ENCODE measurements at regions of chr10 and their contacts with region 1.

Region 1: DNA sequence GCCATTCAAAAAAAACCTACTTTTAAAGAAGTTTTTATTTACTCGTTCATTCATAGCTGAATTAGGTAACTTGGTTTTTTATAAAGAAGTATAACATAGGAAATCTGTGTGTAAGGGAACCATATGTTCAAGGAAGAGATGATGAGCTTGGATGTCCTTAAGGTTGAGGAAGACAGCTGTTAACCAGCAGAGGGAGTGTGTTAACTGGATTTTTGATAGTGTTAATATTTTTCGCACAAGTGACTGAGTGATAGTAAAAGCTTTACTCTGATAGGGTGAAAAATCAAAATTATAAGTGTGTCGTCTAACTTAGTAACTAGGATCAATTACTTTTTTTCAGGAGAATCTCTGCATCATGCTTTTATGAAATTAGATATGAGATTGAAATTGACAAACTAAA is 134.7 kb downstream of the ARL5B start:
- DNase-seq: peak; percentile 49
- H3K4me3 Mint-ChIP-seq: no peak overlapping the region
- H3K27ac Mint-ChIP-seq: no peak overlapping the region
- H3K4me1 Mint-ChIP-seq: peaks cover 7% of the 10 kb centered on the region
- H3K27me3 Mint-ChIP-seq: no peaks in the 10 kb centered on the region
- CTCF ChIP-seq: peak; percentile 46

Region 2: GRCh38 chr10:18400201-18400905 is 393.6 kb before region 1 on chr10:
- CTCF ChIA-PET with region 1: no interaction called
- POLR2A ChIA-PET with region 1: no interaction called
- intact Hi-C with region 1: no loop called
- DNase-seq: no peak
- H3K4me3 Mint-ChIP-seq: peak overlapping the region; percentile 4
- H3K27ac Mint-ChIP-seq: no peak overlapping the region
- H3K4me1 Mint-ChIP-seq: no peaks in the 10 kb centered on the region
- H3K27me3 Mint-ChIP-seq: no peaks in the 10 kb centered on the region
- CTCF ChIP-seq: no peak

Region 3: DNA sequence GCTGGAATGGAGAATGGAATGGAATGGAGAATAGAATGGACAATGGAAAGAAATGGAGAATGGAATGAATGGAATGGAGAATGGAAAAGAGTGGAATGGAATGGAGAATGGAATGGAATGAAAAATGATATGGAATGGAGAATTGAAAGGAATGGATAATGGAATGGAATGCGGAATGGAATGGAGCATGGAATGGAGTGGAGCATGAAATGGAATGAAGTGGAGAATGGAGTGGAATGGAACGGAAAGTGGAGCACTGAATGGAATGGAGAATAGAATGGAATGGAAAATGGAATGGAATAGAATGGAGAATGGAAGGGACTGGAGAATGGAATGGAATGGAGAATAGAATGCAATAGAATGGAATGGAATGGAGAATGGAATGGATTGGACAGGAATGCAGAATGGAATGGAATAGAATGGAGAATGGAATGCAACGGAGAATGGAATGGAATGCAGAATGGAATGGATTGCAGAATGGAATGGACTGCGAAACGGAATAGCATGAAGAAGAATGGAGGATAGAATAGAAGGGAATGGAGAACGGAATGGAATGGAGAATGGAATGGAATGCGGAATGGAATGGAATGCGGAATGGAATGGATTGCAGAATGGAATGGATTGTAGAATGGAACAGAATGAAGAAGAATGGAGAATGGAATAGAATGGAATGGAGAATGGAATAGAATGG is 231.9 kb before region 1 on chr10:
- CTCF ChIA-PET with region 1: no interaction called
- POLR2A ChIA-PET with region 1: no interaction called
- intact Hi-C with region 1: no loop called
- DNase-seq: no peak
- H3K4me3 Mint-ChIP-seq: no peak overlapping the region
- H3K27ac Mint-ChIP-seq: no peak overlapping the region
- H3K4me1 Mint-ChIP-seq: no peaks in the 10 kb centered on the region
- H3K27me3 Mint-ChIP-seq: no peaks in the 10 kb centered on the region
- CTCF ChIP-seq: no peak

Region 4: DNA sequence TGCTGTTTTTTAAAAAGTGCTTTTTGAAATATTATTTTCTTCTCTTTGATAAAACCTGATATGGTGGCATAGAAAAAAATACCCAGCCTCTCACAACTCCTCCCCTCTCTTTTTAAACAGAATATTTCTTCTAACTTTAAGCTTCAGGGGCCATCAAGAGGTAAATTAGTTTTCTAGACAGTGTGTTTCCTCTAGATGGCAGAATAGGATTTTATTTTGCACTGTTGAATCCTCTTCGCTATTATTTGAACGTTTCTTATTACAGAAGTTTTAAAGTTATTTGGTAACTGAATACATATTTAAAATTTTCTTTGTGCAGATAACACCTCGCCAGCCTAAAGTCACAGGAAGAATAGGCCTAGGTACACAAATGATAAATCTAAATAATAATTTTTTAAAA is 104.5 kb before region 1 on chr10:
- CTCF ChIA-PET with region 1: interaction called, 4 read pairs
- POLR2A ChIA-PET with region 1: no interaction called
- intact Hi-C with region 1: loop called (anchors 5 kb)
- DNase-seq: peak; percentile 50
- H3K4me3 Mint-ChIP-seq: no peak overlapping the region
- H3K27ac Mint-ChIP-seq: no peak overlapping the region
- H3K4me1 Mint-ChIP-seq: no peaks in the 10 kb centered on the region
- H3K27me3 Mint-ChIP-seq: no peaks in the 10 kb centered on the region
- CTCF ChIP-seq: peak; percentile 43

Region 5: GRCh38 chr10:18822156-18822555 is 28.2 kb after region 1 on chr10:
- CTCF ChIA-PET with region 1: no interaction called
- POLR2A ChIA-PET with region 1: no interaction called
- intact Hi-C with region 1: no loop called
- DNase-seq: peak; percentile 69
- H3K4me3 Mint-ChIP-seq: no peak overlapping the region
- H3K27ac Mint-ChIP-seq: no peak overlapping the region
- H3K4me1 Mint-ChIP-seq: no peaks in the 10 kb centered on the region
- H3K27me3 Mint-ChIP-seq: no peaks in the 10 kb centered on the region
- CTCF ChIP-seq: no peak

Region 6: DNA sequence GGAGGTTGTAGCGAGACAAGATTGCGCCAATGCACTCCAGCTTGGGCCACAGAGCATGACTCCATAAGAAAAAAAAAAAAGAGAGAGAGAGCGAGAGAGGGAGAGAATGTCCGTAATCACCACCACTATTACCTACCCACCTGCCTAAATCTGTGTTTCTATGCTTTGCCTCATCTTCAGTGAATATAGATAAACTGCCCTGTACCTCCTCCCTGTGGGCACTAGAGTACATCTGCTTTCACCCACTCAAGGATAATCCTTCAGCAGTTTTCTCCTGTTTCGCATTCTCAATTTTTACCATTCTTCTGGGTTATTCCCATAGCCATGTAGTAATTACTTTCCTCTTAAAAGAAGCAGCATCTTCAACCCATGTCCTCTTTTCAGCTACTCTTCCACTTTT is 234.7 kb after region 1 on chr10:
- CTCF ChIA-PET with region 1: interaction called, 6 read pairs
- POLR2A ChIA-PET with region 1: no interaction called
- intact Hi-C with region 1: loop called (anchors 5 kb)
- DNase-seq: no peak
- H3K4me3 Mint-ChIP-seq: no peak overlapping the region
- H3K27ac Mint-ChIP-seq: no peak overlapping the region
- H3K4me1 Mint-ChIP-seq: no peaks in the 10 kb centered on the region
- H3K27me3 Mint-ChIP-seq: no peaks in the 10 kb centered on the region
- CTCF ChIP-seq: no peak

Region 7: DNA sequence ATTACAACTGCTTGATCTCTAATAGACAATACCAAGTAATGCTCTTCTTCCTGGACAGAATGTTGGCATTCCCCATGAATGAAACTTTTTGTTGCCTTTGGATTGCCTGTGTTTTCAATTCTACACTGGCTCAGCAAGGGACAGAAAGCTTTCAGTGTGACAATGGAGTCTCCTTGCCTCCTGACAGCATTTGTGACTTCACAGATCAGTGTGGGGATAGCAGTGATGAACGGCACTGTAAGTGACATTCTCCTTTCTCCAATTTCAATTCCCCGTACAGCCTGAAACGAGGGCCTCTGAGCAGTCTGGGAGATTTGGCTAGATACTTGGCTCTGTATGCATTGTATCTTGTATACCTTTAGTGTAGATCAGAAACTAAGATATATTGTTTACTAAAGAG is 254.9 kb after region 1 on chr10:
- CTCF ChIA-PET with region 1: no interaction called
- POLR2A ChIA-PET with region 1: no interaction called
- intact Hi-C with region 1: no loop called
- DNase-seq: no peak
- H3K4me3 Mint-ChIP-seq: no peak overlapping the region
- H3K27ac Mint-ChIP-seq: no peak overlapping the region
- H3K4me1 Mint-ChIP-seq: no peaks in the 10 kb centered on the region
- H3K27me3 Mint-ChIP-seq: no peaks in the 10 kb centered on the region
- CTCF ChIP-seq: no peak

Measured in MCF 10A (cell line).